Gastrocnemius medialis (tissue), 4 donors: ENCODE measurements at regions of chr12 and their contacts with region 1.

Region 1: DNA sequence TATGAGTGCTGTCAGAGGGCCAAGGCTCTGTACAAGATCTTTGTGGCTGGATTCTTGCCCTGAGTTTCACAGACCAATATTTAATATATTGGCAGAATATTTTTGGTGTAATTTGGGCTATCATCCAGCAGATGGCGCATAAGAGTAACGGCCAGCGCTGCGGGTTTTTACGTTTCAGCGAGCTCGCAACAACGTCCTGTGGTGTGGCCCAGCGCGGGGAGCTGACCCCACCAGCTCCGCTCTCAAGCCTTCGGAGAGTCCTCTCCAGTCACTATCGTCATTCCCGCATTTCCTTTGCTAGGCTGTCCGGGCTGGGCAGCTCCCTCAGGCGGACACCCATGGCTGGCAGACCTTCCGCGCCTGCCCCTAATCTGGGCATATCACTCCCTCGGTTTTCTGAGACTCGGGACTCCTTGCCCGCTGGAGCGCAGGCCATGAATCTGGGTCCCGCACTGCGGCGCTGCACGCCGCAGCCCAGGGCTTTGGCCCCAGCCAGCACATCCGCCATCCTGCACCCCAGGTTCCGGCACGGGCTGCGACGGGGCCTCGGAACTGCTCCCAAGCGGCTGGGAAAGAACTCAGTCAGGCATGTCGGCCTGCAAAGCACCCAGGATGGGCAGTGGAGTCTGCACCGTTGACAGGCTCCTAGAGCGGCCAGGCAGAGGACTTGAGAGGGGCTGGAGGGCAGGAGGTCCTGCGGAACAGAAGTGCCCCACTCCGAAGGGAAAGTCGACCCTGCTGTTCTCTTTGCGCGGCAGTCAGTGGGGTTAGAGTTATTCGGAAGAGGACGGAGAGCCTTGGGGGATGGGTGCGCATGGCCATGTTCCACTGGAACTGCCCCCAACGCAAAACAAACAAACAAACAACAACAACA is 18.4 kb downstream of the OLR1 start:
- DNase-seq: peak; percentile 40 to 64
- ATAC-seq: peak; percentile 92
- H3K4me3 ChIP-seq: peak overlapping the region; percentile 64 to 98 (median 70)
- H3K27ac ChIP-seq: peak overlapping the region; percentile 77 to 84 (median 81)
- H3K4me1 ChIP-seq: peaks cover 4 to 8% of the 10 kb centered on the region in 2 donors
- H3K27me3 ChIP-seq: no peaks in the 10 kb centered on the region
- CTCF ChIP-seq: peak; percentile 76 to 88 (median 83)
- POLR2A ChIP-seq: peak in 1 of 2 donors; percentile 14

Region 2: DNA sequence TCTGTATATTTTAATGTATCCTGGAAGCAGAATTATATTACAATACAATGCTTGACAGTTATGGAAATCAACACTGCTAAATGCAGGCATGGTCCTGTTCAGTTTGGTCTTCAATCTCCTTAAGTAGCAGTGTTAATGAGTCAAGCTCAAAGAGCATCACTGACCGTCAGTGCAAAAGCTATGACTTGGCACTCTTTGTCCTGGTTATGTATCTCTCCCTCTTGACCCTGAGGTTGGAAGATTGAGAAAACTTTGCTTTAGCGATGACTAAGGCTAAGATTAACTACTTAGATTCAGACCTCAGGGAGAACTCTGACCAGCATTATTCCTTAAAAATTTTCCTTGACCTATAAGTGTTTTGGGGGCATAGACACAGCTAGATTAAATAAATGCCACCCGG is 34.4 kb before region 1 on chr12:
- in situ Hi-C with region 1: no loop called
- intact Hi-C with region 1: no loop called
- DNase-seq: no peak
- ATAC-seq: no peak
- H3K4me3 ChIP-seq: no peak overlapping the region
- H3K27ac ChIP-seq: no peak overlapping the region
- H3K4me1 ChIP-seq: no peaks in the 10 kb centered on the region
- H3K27me3 ChIP-seq: no peaks in the 10 kb centered on the region
- CTCF ChIP-seq: no peak
- POLR2A ChIP-seq: no peak

Region 3: DNA sequence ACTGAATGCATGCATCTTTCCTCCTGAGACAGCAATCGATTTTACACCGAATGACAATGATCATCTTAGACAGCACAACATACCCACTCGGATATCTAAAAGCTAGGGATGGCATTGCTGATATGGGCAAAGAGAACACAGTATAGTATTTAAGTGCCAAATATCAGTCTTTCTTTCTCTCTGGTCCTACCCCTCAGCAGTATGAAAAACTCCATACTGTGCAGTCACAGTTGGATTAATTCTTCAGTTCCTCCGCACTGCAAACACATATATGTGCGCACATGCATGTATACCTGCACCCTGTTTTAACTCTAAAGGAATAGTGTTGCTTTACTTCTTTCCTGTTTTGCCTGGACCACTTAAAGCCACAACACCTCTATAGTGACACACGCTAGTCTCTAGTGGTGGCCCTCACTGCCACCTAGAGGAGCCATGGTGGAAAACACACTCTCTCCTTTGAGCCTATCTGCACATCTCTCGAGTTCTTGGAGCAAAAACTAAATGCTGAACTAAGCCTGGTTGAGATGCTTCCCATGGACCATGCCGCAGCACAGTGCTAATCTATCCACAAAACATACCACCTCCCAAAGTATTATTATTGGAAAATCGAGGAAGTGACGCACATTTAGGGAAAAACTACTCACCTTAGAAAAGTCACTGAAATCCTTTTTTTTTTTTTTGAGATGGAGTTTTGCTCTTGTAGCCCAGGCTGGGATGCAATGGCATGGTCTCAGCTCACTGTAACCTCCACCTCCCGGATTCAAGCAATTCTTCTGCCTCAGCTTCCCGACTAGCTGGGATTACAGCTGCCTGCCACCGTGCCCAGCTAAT is 37.3 kb after region 1 on chr12:
- in situ Hi-C with region 1: loop called in 2 of 4 experiments (anchors 5 kb)
- intact Hi-C with region 1: loop called (anchors 1 kb)
- DNase-seq: peak in 1 of 2 donors; percentile 50
- ATAC-seq: peak; percentile 86 to 93
- H3K4me3 ChIP-seq: no peak overlapping the region
- H3K27ac ChIP-seq: no peak overlapping the region
- H3K4me1 ChIP-seq: no peaks in the 10 kb centered on the region
- H3K27me3 ChIP-seq: peaks cover 0 to 4% (median 0%) of the 10 kb centered on the region in 3 donors
- CTCF ChIP-seq: peak; percentile 35 to 75 (median 66)
- POLR2A ChIP-seq: no peak